ENCODE measurements at regions of chr16 and their contacts with region 1.

Region 1: DNA sequence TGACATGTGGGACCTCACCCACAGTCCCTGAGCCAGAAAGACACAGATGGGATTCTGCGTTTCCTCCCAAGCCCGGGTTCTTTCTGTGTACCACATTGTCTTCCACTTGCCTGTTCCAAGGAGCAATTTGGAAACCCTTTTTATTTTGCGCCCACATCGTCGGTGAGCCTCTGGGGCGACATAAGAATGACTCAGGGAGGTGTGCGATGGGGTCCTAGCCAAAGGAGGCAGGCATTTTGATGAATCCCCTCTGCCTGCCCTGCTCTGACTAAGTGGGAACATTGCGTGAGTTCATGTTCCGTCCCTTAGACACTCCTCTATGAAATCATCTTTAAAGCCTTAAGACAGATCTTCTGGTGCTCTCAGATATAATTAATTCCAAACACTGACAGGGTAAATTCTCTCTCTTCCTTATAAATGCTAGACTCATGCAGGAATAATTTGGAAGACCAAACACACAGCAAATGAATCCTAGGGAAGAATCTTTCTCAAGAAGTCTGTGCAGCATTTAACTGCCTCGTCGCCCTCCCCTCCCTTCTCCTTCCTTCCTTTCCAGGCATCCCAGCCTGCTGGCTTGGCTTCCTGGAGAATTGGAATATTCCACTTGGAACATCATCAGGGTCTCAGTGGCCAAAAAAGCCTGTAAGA is 52.7 kb upstream of the FOXF1 start:
- DNase-seq: peak; percentile 94
- H3K4me3 ChIP-seq: no peak overlapping the region
- H3K27ac ChIP-seq: peak overlapping the region; percentile 83 to 88 (median 86)
- H3K4me1 ChIP-seq: peaks cover 3 to 53% (median 44%) of the 10 kb centered on the region in 4 donors
- H3K27me3 ChIP-seq: no peaks in the 10 kb centered on the region
- CTCF ChIP-seq: no peak
- EP300 ChIP-seq: peak; percentile 87 to 96 (median 94)
- POLR2A ChIP-seq: no peak

Region 2: GRCh38 chr16:86078121-86078600 is 379.5 kb before region 1 on chr16:
- intact Hi-C with region 1: loop called (anchors 2 kb)
- DNase-seq: peak; percentile 95
- H3K4me3 ChIP-seq: no peak overlapping the region
- H3K27ac ChIP-seq: peak overlapping the region in 3 of 4 donors; percentile 81 to 89 (median 86)
- H3K4me1 ChIP-seq: peaks cover 0 to 24% (median 15%) of the 10 kb centered on the region in 4 donors
- H3K27me3 ChIP-seq: no peaks in the 10 kb centered on the region
- CTCF ChIP-seq: no peak
- EP300 ChIP-seq: peak; percentile 92 to 97 (median 95)
- POLR2A ChIP-seq: no peak

Region 3: GRCh38 chr16:86199871-86200695 is 257.5 kb before region 1 on chr16:
- intact Hi-C with region 1: loop called (anchors 2 kb)
- DNase-seq: peak; percentile 96
- H3K4me3 ChIP-seq: peak overlapping the region; percentile 12 to 43 (median 32)
- H3K27ac ChIP-seq: peak overlapping the region; percentile 87 to 96 (median 92)
- H3K4me1 ChIP-seq: peaks cover 0 to 54% (median 47%) of the 10 kb centered on the region in 4 donors
- H3K27me3 ChIP-seq: no peaks in the 10 kb centered on the region
- CTCF ChIP-seq: no peak
- EP300 ChIP-seq: peak; percentile 95 to 99 (median 98)
- POLR2A ChIP-seq: no peak

Region 4: GRCh38 chr16:86343027-86343787 is 114.4 kb before region 1 on chr16:
- intact Hi-C with region 1: loop called (anchors 1 kb)
- DNase-seq: peak; percentile 97
- H3K4me3 ChIP-seq: peak overlapping the region; percentile 1 to 22 (median 8)
- H3K27ac ChIP-seq: peak overlapping the region; percentile 87 to 96 (median 94)
- H3K4me1 ChIP-seq: peaks cover 0 to 43% (median 40%) of the 10 kb centered on the region in 4 donors
- H3K27me3 ChIP-seq: no peaks in the 10 kb centered on the region
- CTCF ChIP-seq: no peak
- EP300 ChIP-seq: peak; percentile 98 to 100 (median 99)
- POLR2A ChIP-seq: no peak

Region 5: GRCh38 chr16:86396897-86397296 is 60.7 kb before region 1 on chr16:
- intact Hi-C with region 1: loop called (anchors 1 kb)
- DNase-seq: peak; percentile 95
- H3K4me3 ChIP-seq: peak overlapping the region in 1 of 4 donors; percentile 12
- H3K27ac ChIP-seq: peak overlapping the region; percentile 88 to 94 (median 91)
- H3K4me1 ChIP-seq: peaks cover 0 to 28% (median 23%) of the 10 kb centered on the region in 4 donors
- H3K27me3 ChIP-seq: no peaks in the 10 kb centered on the region
- CTCF ChIP-seq: no peak
- EP300 ChIP-seq: peak; percentile 52 to 92 (median 73)
- POLR2A ChIP-seq: no peak

Region 6: DNA sequence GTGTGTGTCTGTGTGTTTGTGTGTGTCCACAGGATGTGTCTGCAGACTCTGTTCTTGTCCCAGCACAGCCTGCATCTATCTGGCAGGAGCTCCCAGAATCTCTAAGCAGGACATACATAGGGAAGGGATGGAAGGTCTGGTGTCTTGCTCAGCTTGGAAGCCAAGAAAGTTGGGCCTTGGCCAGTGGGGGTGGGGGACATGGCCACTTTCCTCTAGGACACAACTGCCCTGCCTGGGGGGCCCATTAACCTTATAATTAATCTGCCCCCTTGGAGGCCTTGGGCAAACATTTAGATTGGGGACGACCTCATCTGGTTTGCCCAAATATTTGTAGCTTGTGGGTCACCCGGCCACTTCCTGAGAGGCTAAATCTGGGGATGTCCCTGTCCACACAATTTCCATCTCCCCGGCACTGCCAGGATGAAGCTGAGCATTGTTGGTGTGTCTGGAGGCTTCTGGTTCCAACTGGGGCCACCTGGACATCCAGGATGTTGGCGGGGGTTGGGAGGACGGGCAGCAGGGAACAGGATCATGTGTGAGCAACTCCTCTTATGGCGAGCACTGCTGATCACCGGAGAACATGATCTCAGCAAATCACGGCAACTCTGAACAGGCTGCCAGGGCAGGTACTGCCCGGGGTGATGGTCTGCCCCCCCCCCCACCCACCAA is 35.5 kb after region 1 on chr16:
- intact Hi-C with region 1: loop called (anchors 1 kb)
- DNase-seq: peak; percentile 89
- H3K4me3 ChIP-seq: no peak overlapping the region
- H3K27ac ChIP-seq: peak overlapping the region; percentile 99 to 100 (median 99)
- H3K4me1 ChIP-seq: peaks cover 0 to 61% (median 55%) of the 10 kb centered on the region in 4 donors
- H3K27me3 ChIP-seq: peaks cover 0 to 14% (median 0%) of the 10 kb centered on the region in 3 donors
- CTCF ChIP-seq: no peak
- EP300 ChIP-seq: peak in 2 of 4 donors; percentile 31 to 80
- POLR2A ChIP-seq: no peak